ENCODE measurements at regions of chr19 and their contacts with region 1.

Region 1: GRCh38 chr19:12440541-12441316 is at the start of gene ZNF443:
- DNase-seq: peak; percentile 98
- H3K4me3 ChIP-seq: peak within 1 kb of the TSS; percentile 77
- H3K27ac ChIP-seq: peak within 1 kb of the TSS; percentile 31
- H3K4me1 ChIP-seq: peaks cover 3% of the 10 kb centered on the region
- CTCF ChIP-seq: 0 out of 2 replicates have a peak, but pooled peaks have one; percentile 29
- total RNA-seq, gene ZNF443: 2.3 and 2.6 TPM in 2 replicates

Region 2: GRCh38 chr19:12400633-12401502 is 39.9 kb before region 1 on chr19 and contains the start of gene ZNF799:
- CTCF ChIA-PET with region 1: no interaction called
- POLR2A ChIA-PET with region 1: interaction called, 3 read pairs
- intact Hi-C with region 1: loop called (anchors 5 kb)
- DNase-seq: peak; percentile 95
- H3K4me3 ChIP-seq: peak within 1 kb of the TSS; percentile 95
- H3K27ac ChIP-seq: peak within 1 kb of the TSS; percentile 32
- H3K4me1 ChIP-seq: peaks cover 6% of the 10 kb centered on the region
- CTCF ChIP-seq: 0 out of 2 replicates have a peak, but pooled peaks have one; percentile 33
- total RNA-seq, gene ZNF799: 3.8 and 6.2 TPM in 2 replicates

Region 3: DNA sequence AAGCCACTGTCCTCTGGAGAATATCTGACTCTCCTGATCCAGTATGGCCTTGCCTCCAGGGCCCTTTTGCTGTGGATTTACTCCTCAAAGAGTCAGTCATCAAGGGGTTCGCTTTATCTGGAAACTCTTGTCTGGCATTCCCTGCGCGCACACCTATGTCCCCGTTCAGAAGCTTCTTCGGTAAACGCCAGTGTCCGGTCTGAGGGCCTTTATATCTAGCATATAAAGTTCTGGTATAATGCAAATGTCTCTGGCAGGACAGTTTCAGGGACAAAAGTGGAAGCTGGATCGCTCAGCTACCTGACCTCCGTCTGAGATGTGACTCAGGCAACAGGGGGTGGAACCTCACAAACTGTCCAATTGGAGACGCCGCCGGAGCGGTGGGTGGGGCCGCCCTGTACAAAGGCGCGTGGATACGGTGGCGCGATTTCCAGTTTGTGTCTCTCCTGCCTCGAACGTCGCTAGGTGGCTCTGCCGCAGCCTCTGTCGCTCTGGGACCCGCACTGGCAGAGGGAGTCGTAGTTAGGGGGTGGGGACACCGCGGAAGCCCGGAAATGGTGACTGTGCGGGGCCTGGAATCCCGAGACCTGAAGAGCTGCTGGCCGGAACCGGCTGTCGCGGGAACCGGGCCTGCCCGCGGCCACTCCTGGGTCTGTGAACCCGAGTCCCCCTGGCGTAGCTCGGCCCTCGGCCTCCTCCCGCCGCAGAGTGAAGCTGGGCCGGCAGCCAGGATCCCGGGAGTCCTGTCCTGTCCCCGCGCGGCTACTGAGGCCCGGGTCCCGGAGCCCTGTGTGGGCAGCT is 54.5 kb after region 1 on chr19:
- CTCF ChIA-PET with region 1: no interaction called
- POLR2A ChIA-PET with region 1: no interaction called
- intact Hi-C with region 1: loop called (anchors 2 kb)
- DNase-seq: peak; percentile 96
- H3K4me3 ChIP-seq: peak overlapping the region; percentile 70
- H3K27ac ChIP-seq: peak overlapping the region; percentile 38
- H3K4me1 ChIP-seq: peaks cover 13% of the 10 kb centered on the region
- CTCF ChIP-seq: peak; percentile 80